ENCODE measurements at regions of chr1 and their contacts with region 1.

Region 1: DNA sequence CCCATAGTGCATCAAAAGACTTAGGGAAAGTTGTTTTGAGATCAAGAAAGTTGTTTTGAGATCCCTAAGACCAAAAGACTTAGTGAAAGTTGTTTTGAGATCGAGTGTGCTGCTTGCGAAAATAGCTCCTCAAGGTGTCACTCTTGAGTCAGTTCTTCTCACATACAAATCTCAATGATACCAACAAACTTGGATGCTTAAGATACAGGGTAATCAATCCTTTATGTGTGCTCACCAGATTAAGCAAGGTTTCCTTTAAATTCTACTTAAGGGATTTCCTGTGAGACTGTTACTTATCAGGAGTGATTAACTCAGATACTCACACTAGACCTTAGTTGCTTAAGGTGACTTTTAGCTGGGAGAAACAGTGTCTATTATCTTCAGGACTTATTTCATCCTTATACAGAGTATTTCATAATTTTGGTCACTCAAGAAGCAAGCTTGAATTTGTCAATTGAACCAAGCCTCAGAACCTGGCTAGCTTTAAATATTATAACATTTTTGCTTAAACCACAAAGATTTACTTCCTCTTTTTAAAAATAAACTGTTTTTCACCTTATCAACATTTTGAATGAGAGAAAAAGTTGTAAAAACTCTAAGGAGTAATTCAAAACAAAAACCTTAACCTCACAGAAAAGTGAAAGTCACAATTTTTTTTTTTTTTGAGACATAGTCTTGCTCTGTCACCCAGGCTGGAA is 8.0 kb upstream of the RLF start:
- DNase-seq: peak; percentile 38
- H3K4me3 Mint-ChIP-seq: no peak overlapping the region
- H3K27ac Mint-ChIP-seq: no peak overlapping the region
- H3K4me1 Mint-ChIP-seq: peaks cover 5% of the 10 kb centered on the region
- H3K27me3 Mint-ChIP-seq: peaks cover 3% of the 10 kb centered on the region

Region 2: DNA sequence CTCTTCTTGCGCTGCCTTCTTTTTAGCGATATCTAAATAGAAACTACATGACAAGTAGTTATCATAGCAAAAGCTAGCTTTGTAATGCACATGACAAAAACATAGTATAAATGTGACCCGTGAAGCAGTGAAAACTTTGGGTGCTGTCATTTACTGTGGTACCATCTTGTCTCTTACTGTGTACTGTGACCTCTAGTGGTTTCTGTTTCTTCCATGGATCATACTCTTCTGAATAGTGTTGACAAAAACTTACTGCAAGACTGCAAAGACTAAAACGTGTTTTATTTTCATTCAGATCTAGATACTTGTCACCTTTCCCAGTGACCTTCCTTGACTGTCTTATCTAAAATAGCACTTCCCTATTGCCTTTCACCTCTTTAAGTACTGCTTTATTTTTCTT is 14.1 kb after region 1 on chr1:
- CTCF ChIA-PET with region 1: interaction called, 34 read pairs
- POLR2A ChIA-PET with region 1: interaction called, 3 read pairs
- intact Hi-C with region 1: no loop called
- DNase-seq: no peak
- H3K4me3 Mint-ChIP-seq: no peak overlapping the region
- H3K27ac Mint-ChIP-seq: no peak overlapping the region
- H3K4me1 Mint-ChIP-seq: peaks cover 16% of the 10 kb centered on the region
- H3K27me3 Mint-ChIP-seq: no peaks in the 10 kb centered on the region

Region 3: DNA sequence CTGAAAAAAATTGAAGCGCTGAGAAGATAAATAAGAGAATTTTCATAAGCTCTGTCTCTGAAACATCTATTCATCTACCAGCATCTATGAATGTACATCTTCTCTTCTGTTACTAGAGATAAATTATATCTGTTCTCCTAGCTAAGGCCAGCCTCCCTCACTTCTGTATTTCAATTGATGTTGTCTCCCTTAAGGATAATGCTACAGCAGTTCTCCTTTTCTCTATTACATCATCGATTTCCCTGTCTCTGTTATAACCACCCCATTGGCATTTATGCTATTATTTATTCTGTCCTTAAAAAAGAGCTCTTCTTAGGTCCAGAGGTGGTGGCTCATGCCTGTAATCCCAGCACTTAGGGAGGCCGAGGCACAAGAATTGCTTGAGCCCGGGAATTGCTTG is 51.6 kb after region 1 on chr1:
- CTCF ChIA-PET with region 1: no interaction called
- POLR2A ChIA-PET with region 1: no interaction called
- intact Hi-C with region 1: no loop called
- DNase-seq: no peak
- H3K4me3 Mint-ChIP-seq: no peak overlapping the region
- H3K27ac Mint-ChIP-seq: no peak overlapping the region
- H3K4me1 Mint-ChIP-seq: peaks cover 13% of the 10 kb centered on the region
- H3K27me3 Mint-ChIP-seq: no peaks in the 10 kb centered on the region

Region 4: GRCh38 chr1:40270152-40270834 is 117.1 kb after region 1 on chr1:
- CTCF ChIA-PET with region 1: interaction called, 11 read pairs
- POLR2A ChIA-PET with region 1: interaction called, 3 read pairs
- intact Hi-C with region 1: no loop called
- DNase-seq: peak; percentile 48
- H3K4me3 Mint-ChIP-seq: no peak overlapping the region
- H3K27ac Mint-ChIP-seq: peak overlapping the region; percentile 93
- H3K4me1 Mint-ChIP-seq: peaks cover 42% of the 10 kb centered on the region
- H3K27me3 Mint-ChIP-seq: no peaks in the 10 kb centered on the region

Region 5: GRCh38 chr1:40315239-40315794 is 162.1 kb after region 1 on chr1:
- CTCF ChIA-PET with region 1: interaction called, 82 read pairs
- POLR2A ChIA-PET with region 1: interaction called, 3 read pairs
- intact Hi-C with region 1: loop called (anchors 1 kb)
- DNase-seq: peak; percentile 91
- H3K4me3 Mint-ChIP-seq: peak overlapping the region; percentile 85
- H3K27ac Mint-ChIP-seq: no peak overlapping the region
- H3K4me1 Mint-ChIP-seq: peaks cover 47% of the 10 kb centered on the region
- H3K27me3 Mint-ChIP-seq: peaks cover 9% of the 10 kb centered on the region

Region 6: DNA sequence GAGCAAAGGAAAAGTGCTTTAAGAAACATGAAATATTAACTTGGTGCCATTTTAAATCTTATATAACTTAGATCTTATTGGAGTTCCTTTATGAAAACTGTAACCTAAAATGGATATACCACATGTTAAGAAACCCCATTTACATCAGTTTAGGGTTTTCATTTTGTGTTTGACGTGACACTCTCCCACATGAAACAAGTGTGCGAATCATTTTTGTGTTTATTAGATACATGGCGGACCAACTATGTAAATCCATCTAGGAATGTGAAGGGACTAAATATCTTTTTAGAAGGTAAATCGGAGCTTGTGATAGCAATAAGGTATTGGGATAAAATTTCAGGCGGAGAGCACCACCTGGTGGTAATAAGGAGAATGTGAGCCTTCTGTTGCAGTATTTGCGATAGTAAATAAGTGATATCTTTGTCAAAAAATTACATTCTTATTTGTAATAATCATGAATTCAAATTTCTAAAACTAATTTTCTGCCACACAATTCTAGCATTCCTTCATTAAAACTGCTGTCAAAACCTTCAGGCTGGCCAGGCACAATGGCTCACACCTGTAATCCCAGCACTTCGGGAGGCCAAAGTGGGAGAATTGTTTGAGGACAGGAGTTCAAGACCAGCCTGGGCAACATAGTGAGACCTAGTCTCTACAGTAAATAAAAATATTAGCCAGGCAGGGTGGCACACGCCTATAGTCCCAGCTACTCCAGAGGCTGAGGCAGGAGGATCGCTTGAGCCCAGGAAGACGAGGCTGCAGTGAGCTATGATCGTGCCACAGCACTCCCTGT is 251.6 kb after region 1 on chr1:
- CTCF ChIA-PET with region 1: interaction called, 25 read pairs
- POLR2A ChIA-PET with region 1: interaction called, 3 read pairs
- intact Hi-C with region 1: no loop called
- DNase-seq: peak; percentile 49
- H3K4me3 Mint-ChIP-seq: peak overlapping the region; percentile 52
- H3K27ac Mint-ChIP-seq: peak overlapping the region; percentile 88
- H3K4me1 Mint-ChIP-seq: peaks cover 72% of the 10 kb centered on the region
- H3K27me3 Mint-ChIP-seq: no peaks in the 10 kb centered on the region

Region 7: DNA sequence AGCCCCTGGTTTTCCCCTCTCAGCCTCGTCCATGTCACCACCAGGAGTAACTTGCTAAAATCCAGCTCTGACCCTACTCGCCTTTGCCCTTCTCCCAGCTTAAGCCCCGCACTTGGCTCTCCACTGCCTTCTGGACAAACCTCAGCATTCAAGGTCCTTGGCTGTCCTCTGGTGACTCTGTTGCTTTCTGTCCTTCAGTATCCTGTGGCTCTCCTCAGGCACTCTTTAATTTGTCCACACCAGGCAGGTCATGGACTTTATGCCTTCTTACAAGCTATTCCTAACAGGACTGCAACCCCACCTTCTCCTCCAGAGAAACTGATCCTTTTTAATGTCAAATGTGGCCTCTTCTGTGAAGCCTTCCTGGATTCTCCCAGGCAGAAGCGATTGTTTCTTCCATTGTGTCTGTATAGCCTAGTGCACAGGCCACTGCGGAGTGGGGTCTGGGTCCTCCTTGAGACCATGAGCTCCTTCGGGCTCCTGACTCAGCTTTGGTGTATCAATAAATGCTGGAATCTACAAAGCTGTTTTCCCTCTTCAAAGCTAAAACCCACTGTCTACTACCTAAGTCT is 799.6 kb after region 1 on chr1:
- CTCF ChIA-PET with region 1: no interaction called
- POLR2A ChIA-PET with region 1: no interaction called
- intact Hi-C with region 1: no loop called
- DNase-seq: no peak
- H3K4me3 Mint-ChIP-seq: no peak overlapping the region
- H3K27ac Mint-ChIP-seq: no peak overlapping the region
- H3K4me1 Mint-ChIP-seq: peaks cover 8% of the 10 kb centered on the region
- H3K27me3 Mint-ChIP-seq: peaks cover 13% of the 10 kb centered on the region

Measured in activated CD4-positive, alpha-beta memory T cell treated with anti-CD3 and anti-CD28 coated beads for 36 hours (primary cell).